Heart right ventricle (tissue), 16 donors: ENCODE measurements at regions of chr5 and their contacts with region 1.

Region 1: GRCh38 chr5:115309751-115310370 is 13.4 kb upstream of the CCDC112 start:
- DNase-seq: no peak
- ATAC-seq: peak in 2 of 8 donors; percentile 51 to 55
- H3K4me3 ChIP-seq: no peak overlapping the region
- H3K27ac ChIP-seq: no peak overlapping the region
- H3K4me1 ChIP-seq: no peaks in the 10 kb centered on the region
- H3K27me3 ChIP-seq: peaks cover 0 to 12% (median 0%) of the 10 kb centered on the region in 7 donors
- CTCF ChIP-seq: peak; percentile 55 to 87 (median 77)

Region 2: DNA sequence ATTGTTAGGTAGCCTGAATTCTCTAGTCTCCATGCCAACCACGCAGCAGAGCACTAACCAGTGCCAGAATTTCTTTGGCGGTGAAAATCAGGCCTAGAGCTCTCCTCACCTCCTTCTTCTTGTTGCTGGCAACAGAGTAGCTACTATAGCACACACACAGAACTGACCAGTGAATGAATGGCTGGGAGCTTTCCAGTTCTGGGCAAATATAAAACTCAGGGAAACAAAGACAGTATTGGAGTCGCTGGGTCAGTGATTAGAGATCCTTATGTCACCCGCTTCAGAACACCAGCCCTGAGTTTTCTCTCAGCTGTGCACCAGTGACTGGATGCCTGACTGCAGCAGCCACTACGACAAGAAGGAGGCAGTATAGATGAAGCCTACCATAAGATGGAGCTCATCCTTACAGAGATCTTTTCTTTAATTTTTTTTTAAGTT is 261.6 kb after region 1 on chr5:
- intact Hi-C with region 1: loop called in 7 of 10 experiments (anchors 1 to 5 kb)
- DNase-seq: peak in 1 of 2 donors; percentile 47
- ATAC-seq: peak; percentile 59 to 91 (median 76)
- H3K4me3 ChIP-seq: no peak overlapping the region
- H3K27ac ChIP-seq: peak overlapping the region in 3 of 10 donors; percentile 0 to 24 (median 19)
- H3K4me1 ChIP-seq: peaks cover 0 to 28% (median 10%) of the 10 kb centered on the region in 9 donors
- H3K27me3 ChIP-seq: no peaks in the 10 kb centered on the region
- CTCF ChIP-seq: peak in 3 of 9 donors; percentile 14 to 27 (median 26)

Region 3: DNA sequence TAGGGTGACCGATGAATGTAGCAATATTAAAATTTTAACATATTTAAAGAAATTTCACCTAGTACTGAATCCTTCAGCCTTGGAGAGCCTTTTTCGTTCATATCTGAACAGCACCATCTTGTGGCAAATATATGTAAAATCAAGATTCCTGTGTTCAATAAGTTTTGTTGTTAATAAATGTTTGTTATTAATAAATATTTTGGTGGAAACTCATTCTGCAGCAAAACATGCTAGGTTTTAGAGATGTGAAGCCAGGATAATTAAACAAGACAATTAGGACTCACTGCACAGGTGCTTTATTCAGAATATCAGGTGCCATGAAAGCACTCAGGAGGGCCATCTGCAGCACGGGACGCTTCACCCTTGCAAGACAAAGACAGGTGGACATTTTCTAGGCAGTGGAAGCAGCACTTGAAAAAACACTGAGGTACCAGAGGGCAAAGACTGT is 276.8 kb after region 1 on chr5:
- intact Hi-C with region 1: loop called (anchors 1 to 5 kb)
- DNase-seq: no peak
- ATAC-seq: peak in 3 of 8 donors; percentile 31 to 52 (median 43)
- H3K4me3 ChIP-seq: no peak overlapping the region
- H3K27ac ChIP-seq: no peak overlapping the region
- H3K4me1 ChIP-seq: peaks cover 0 to 33% (median 10%) of the 10 kb centered on the region in 9 donors
- H3K27me3 ChIP-seq: no peaks in the 10 kb centered on the region
- CTCF ChIP-seq: peak; percentile 46 to 76 (median 64)

Region 4: DNA sequence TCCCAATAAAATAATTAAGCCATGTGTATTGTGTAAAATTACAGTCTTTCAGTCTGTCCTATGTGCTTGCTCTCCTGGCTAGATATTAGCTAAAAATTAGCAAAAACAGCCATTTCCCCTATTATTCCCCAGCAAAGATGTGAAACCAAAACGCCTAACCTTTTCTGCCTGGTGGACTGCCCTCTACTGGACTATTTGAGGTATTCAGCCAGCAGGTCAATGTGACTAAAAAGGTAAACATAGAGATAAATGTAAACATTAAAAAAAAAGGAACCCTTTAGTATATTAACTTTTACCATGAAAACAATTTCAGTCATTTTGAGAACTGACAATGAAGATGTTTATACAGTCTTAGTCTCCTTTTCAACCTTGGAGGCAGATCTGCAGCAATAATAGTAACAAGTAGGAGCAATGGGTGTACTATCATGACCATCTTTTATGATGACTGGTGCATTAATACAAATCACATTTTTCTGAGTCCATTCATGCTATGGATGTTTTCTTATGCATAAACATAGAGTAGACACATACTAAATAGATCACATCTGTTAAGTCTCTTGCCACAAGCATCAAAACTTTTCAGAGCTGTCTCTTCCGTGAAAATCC is 521.4 kb after region 1 on chr5:
- intact Hi-C with region 1: loop called in 5 of 10 experiments (anchors 5 to 10 kb)
- DNase-seq: peak in 1 of 2 donors; percentile 17
- ATAC-seq: peak in 2 of 8 donors; percentile 42 to 49
- H3K4me3 ChIP-seq: no peak overlapping the region
- H3K27ac ChIP-seq: no peak overlapping the region
- H3K4me1 ChIP-seq: peaks cover 0 to 5% (median 0%) of the 10 kb centered on the region in 9 donors
- H3K27me3 ChIP-seq: no peaks in the 10 kb centered on the region
- CTCF ChIP-seq: peak; percentile 52 to 85 (median 78)

Region 5: DNA sequence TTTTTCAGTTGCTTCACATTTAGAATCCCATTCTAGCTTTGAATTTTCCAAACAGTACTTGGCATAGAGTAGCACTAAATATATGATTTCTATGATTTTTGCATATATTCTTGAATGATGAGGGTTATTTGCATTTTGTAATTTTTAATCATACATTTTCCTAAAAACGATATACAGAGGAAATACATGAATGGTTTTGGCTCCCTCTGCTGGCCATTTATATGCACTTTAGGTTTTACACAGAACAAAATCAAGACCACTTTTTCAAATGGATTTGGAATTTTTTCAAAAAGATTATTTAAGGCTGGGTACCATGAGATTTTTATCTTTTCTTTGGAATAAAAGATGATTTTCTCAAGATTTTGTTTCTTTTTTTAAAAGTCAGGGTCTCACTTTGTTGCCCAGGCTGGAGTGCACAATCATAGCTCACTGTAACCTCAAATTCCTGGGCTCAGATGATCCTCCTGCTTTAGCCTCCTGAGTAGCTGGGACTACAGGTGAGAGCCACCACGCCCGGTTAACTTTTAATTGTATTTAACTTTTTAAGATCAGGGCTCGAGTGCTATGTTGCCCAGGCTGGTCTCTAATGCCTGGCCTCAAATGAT is 758.3 kb after region 1 on chr5:
- intact Hi-C with region 1: loop called in 1 of 10 experiments (anchors 10 kb)
- DNase-seq: peak in 1 of 2 donors; percentile 31
- ATAC-seq: peak in 1 of 8 donors; percentile 54
- H3K4me3 ChIP-seq: no peak overlapping the region
- H3K27ac ChIP-seq: no peak overlapping the region
- H3K4me1 ChIP-seq: peaks cover 0 to 5% (median 0%) of the 10 kb centered on the region in 9 donors
- H3K27me3 ChIP-seq: peaks cover 0 to 16% (median 5%) of the 10 kb centered on the region in 7 donors
- CTCF ChIP-seq: peak; percentile 76 to 91 (median 85)